ENCODE measurements at regions of chr20 and their contacts with region 1.

Region 1: GRCh38 chr20:33992923-33993575 is 662 bp upstream of the RALY start:
- DNase-seq: peak; percentile 98
- ATAC-seq: peak; percentile 84
- H3K4me3 Mint-ChIP-seq: peak overlapping the region; percentile 95
- H3K27ac Mint-ChIP-seq: peak overlapping the region; percentile 98
- H3K4me1 Mint-ChIP-seq: peaks cover 60% of the 10 kb centered on the region
- H3K27me3 Mint-ChIP-seq: no peaks in the 10 kb centered on the region
- CTCF ChIP-seq: no peak

Region 2: DNA sequence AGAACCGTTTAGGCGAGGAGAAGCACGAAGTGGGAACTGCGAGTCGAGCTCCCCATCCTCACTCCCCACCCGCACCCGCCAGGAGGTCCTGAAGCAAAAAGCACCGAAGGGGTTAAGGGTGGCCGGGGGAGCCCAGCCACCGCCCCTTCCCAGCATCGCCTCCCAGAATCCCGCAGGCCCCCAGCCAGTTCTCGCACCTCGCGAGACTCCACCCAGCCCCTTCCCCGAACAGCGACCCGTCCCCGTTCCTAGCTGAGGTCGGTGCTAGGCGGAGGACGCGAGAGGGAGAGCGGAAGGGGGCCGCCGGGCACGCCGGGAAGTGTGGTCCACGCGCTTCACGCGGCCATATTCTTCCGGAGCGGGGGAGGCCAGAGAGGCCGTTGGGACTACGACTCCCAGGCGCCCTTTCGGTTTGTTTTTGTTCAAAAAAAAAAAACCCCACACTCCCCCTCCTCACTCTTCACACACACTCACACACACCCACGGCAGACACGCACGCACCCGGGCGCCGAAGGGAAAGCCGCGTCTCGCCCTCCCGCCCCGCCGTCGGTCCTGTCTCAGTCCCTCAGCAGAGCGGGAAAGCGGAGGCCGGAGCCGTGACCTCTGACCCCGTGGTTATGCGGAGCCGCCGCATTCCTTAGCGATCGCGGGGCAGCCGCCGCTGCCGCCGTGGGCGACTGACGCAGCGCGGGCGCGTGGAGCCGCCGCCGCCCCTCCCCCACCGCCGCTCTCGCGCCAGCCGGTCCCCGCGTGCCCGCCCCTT is 1635.0 kb before region 1 on chr20 and contains the start of gene ASXL1:
- CTCF ChIA-PET with region 1: no interaction called
- POLR2A ChIA-PET with region 1: no interaction called
- intact Hi-C with region 1: loop called (anchors 10 kb)
- DNase-seq: peak; percentile 94
- ATAC-seq: peak; percentile 81
- H3K4me3 Mint-ChIP-seq: peak within 1 kb of the TSS; percentile 98
- H3K27ac Mint-ChIP-seq: peak within 1 kb of the TSS; percentile 100
- H3K4me1 Mint-ChIP-seq: peaks cover 76% of the 10 kb centered on the region
- H3K27me3 Mint-ChIP-seq: no peaks in the 10 kb centered on the region
- CTCF ChIP-seq: no peak
- total RNA-seq, gene ASXL1: 145 and 169 TPM in 2 replicates

Region 3: DNA sequence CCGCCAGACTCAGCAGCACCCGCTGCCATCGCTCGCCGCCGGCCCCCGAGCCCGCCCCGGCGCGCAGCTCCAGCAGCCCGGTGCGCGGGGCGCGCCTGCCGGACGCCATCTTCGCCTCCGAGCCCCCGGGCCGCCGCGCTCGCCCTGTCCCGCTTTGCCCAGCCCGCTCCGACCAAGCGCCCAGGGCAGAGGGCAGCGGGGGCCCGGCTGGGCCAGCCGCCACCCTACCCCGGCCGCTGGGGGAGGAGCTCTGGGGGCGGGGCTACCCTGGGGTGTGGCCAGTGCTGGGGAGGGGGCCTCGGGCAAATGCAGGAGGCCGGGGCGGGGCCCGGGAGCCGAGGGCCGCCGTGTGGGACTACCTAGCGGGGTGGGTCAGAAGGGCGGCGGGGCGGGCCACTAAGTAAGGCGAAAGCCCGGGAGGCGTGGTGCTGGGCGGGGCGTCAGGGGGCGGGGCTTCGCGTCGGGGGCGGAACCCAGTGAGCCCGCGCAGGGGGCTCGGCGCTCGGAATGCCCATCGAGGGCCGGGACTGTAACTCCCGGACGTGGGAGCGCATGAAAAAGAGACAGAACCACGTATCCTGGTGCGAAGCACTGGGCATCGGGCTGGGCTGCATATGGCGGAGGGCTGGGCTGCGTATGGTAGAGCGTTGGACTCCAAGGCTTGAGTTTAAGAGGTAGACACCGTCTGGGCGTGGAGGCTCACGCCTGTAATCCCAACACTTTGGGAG is 549.4 kb before region 1 on chr20 and contains the start of gene SNTA1:
- CTCF ChIA-PET with region 1: no interaction called
- POLR2A ChIA-PET with region 1: interaction called, 5 read pairs
- intact Hi-C with region 1: loop called (anchors 1 kb)
- DNase-seq: peak; percentile 86
- ATAC-seq: peak; percentile 89
- H3K4me3 Mint-ChIP-seq: peak within 1 kb of the TSS; percentile 89
- H3K27ac Mint-ChIP-seq: peak within 1 kb of the TSS; percentile 83
- H3K4me1 Mint-ChIP-seq: peaks cover 29% of the 10 kb centered on the region
- H3K27me3 Mint-ChIP-seq: no peaks in the 10 kb centered on the region
- CTCF ChIP-seq: no peak
- total RNA-seq, gene SNTA1: 1.7 and 2.0 TPM in 2 replicates

Region 4: DNA sequence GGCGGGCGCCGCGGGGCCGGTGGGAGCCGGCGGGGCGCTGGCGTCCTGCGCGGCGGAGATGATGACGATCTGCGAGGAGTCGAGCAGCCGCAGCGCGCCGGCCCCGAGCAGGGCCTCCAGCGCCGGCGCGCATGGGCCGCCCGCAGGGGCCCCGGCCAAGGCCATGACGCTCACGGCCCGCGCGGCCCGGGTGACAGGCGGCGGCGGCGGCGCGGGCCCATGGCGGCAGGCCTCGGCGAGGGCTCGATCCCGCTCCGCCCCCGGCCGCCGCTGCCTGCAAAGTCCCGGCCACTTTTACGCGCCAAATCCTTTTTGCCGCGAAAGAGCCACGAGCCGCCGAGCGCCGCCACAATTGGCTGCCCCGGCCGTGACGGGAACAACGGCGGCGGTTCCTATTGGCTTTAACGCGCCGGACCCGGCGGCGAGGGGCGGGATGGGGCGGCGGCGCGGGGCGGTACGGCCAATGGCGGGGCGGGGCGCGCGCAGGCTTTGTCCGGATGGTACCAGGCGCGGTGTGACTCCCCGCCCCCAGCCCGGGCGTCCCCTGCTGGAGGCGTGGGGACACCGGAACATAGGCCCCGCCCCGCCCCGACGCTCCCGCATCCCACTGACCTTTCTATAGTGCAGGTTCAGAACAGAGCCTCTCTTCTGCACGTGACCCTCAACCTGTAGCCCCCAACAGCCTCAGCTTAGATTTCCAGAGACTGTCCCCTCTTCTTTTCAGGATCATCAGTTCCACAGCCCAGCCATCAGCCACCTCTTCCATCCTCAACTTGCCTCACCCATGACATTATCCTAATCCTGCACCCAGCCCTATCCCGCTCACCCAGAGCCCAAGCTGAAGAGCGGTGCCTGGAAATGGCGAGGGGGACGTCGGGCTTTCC is 306.7 kb before region 1 on chr20 and contains the start of gene E2F1:
- CTCF ChIA-PET with region 1: no interaction called
- POLR2A ChIA-PET with region 1: interaction called, 3 read pairs
- intact Hi-C with region 1: loop called (anchors 1 kb)
- DNase-seq: peak; percentile 95
- ATAC-seq: peak; percentile 93
- H3K4me3 Mint-ChIP-seq: peak within 1 kb of the TSS; percentile 86
- H3K27ac Mint-ChIP-seq: peak within 1 kb of the TSS; percentile 77
- H3K4me1 Mint-ChIP-seq: peaks cover 30% of the 10 kb centered on the region
- H3K27me3 Mint-ChIP-seq: no peaks in the 10 kb centered on the region
- CTCF ChIP-seq: no peak
- total RNA-seq, gene E2F1: 6.7 and 8.9 TPM in 2 replicates

Region 5: DNA sequence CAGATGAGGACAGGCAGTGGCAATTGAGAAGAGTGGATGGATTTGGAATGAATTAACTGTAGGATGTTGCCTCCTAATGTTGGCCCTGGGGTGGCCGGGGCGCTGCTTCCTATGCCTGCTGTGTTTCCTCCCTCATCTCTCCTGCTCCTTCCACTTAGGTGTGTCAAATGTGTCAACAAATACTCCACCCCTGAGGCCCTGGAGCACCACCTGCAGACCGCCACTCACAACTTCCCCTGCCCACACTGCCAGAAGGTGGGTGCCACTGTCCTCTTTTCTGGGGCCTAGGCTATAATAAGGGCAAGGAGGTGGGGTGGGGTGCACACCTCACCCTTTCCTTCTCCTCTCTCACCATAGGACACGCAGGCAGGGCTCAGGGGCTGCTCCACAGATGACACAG is 211.9 kb before region 1 on chr20:
- CTCF ChIA-PET with region 1: interaction called, 3 read pairs
- POLR2A ChIA-PET with region 1: interaction called, 10 read pairs
- intact Hi-C with region 1: loop called (anchors 1 kb)
- DNase-seq: no peak
- ATAC-seq: no peak
- H3K4me3 Mint-ChIP-seq: peak overlapping the region; percentile 12
- H3K27ac Mint-ChIP-seq: peak overlapping the region; percentile 95
- H3K4me1 Mint-ChIP-seq: peaks cover 86% of the 10 kb centered on the region
- H3K27me3 Mint-ChIP-seq: no peaks in the 10 kb centered on the region
- CTCF ChIP-seq: no peak

Region 6: GRCh38 chr20:34022154-34022838 is 29.2 kb after region 1 on chr20:
- CTCF ChIA-PET with region 1: no interaction called
- POLR2A ChIA-PET with region 1: interaction called, 7 read pairs
- intact Hi-C with region 1: loop called (anchors 2 kb)
- DNase-seq: no peak
- ATAC-seq: peak; percentile 76
- H3K4me3 Mint-ChIP-seq: peak overlapping the region; percentile 16
- H3K27ac Mint-ChIP-seq: peak overlapping the region; percentile 69
- H3K4me1 Mint-ChIP-seq: peaks cover 83% of the 10 kb centered on the region
- H3K27me3 Mint-ChIP-seq: no peaks in the 10 kb centered on the region
- CTCF ChIP-seq: no peak

Region 7: GRCh38 chr20:34302723-34303528 is 309.9 kb after region 1 on chr20 and contains the start of gene AHCY:
- CTCF ChIA-PET with region 1: no interaction called
- POLR2A ChIA-PET with region 1: no interaction called
- intact Hi-C with region 1: loop called (anchors 1 kb)
- DNase-seq: peak; percentile 90
- ATAC-seq: peak; percentile 91
- H3K4me3 Mint-ChIP-seq: peak within 1 kb of the TSS; percentile 94
- H3K27ac Mint-ChIP-seq: peak within 1 kb of the TSS; percentile 93
- H3K4me1 Mint-ChIP-seq: peaks cover 22% of the 10 kb centered on the region
- H3K27me3 Mint-ChIP-seq: no peaks in the 10 kb centered on the region
- CTCF ChIP-seq: no peak
- total RNA-seq, gene AHCY: 77.9 and 83.5 TPM in 2 replicates

Measured in activated B cell treated with CpG ODN at 0.5 μM for 24 hours (primary cell).